Left lung (tissue), 14 donors: ENCODE measurements at regions of chr1 and their contacts with region 1.

Region 1: DNA sequence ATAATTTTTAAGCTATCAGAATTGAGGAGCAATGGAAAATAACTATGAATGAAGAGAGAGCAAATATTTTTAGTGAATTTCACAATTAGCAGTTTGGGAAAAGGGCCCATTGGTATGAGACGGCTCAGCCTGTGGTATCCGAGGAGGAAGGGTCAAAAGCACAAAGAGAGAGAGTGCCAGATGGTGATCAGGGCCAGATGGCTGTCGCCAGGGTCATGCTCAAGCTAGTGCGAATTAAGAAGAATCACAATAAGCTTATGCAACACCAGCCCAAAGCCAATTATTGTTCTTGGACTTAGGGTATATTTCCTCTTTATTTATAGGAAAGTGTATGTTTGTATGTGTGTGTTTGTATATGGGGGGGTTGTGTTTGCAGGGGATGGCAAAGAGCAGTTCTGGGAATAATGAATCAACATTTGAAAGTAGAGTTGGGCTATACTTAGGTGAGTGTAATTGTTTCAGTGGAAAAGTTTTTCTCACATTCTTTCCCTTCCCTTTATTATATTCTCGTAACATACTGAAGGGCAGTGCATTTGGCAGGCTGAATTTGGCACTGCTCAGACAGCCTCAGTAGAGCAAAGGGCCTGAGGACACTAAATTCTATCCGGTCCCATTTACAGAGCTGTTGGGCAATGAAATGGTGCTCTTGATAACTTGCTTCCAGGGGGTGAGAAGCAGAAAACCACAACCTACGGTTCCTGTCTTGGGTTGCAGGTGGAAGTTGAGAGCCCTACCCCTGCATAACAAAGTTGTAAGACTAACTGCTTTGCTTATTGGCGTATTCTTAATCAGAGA is 19.5 kb upstream of the DDR2 start:
- DNase-seq: peak in 1 of 4 donors; percentile 61
- ATAC-seq: peak; percentile 63
- H3K4me3 ChIP-seq: no peak overlapping the region
- H3K27ac ChIP-seq: peak overlapping the region in 1 of 2 donors; percentile 15
- H3K4me1 ChIP-seq: peaks cover 3 to 6% of the 10 kb centered on the region in 2 donors
- H3K27me3 ChIP-seq: no peaks in the 10 kb centered on the region
- CTCF ChIP-seq: no peak

Region 2: DNA sequence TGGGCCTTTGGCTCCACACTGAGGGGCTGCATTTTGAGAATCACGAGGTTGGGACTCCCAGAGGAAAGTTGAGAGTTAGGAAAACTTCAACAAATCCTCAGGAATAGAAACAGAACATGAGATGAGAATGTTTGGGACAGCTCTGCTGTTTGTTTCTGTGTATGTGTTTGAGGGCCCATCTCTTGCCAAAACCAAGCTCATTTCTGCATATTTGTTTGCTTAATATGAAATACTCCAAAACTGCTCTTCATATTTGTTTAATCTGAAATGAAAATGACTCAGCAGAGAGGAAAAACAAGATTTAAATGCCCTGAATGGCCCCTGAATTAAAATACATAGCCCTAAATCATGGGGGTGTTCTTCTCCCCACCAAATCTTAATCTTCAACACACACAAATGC is 97.5 kb after region 1 on chr1:
- intact Hi-C with region 1: loop called in 1 of 2 experiments (anchors 10 kb)
- DNase-seq: peak in 2 of 4 donors; percentile 51 to 59
- ATAC-seq: peak; percentile 68
- H3K4me3 ChIP-seq: no peak overlapping the region
- H3K27ac ChIP-seq: peak overlapping the region; percentile 35 to 78
- H3K4me1 ChIP-seq: peaks cover 16 to 23% of the 10 kb centered on the region in 2 donors
- H3K27me3 ChIP-seq: no peaks in the 10 kb centered on the region
- CTCF ChIP-seq: no peak